GM10248 (cell line): ENCODE measurements at regions of chr6 and their contacts with region 1.

Region 1: GRCh38 chr6:25490018-25490801 is 161.8 kb upstream of the SCGN start:
- DNase-seq: peak; percentile 73
- CTCF ChIP-seq: peak; percentile 84

Region 2: GRCh38 chr6:25223490-25223991 is 266.7 kb before region 1 on chr6:
- CTCF ChIA-PET with region 1: interaction called, 25 read pairs
- POLR2A ChIA-PET with region 1: no interaction called
- DNase-seq: peak; percentile 62
- CTCF ChIP-seq: peak; percentile 92

Region 3: DNA sequence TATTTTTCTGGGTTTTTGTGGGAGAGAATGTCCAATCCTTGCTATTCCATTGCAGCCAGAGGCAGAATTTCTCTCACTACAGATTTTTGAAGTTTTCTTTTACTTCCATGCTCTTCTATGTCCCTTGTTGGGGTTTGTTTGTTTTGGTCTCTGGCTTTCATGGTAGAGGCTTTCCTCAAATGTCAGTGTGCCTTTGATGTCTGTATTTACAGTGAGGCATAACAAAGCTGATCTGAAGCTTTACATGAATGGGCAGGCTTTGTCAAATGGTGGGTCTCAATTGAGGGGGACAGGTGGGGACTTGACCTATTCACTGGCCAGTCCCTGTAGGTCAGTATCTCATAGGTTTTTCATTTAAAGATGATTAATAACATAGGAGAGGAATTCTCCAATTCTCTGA is 219.7 kb before region 1 on chr6:
- CTCF ChIA-PET with region 1: interaction called, 97 read pairs
- POLR2A ChIA-PET with region 1: no interaction called
- DNase-seq: no peak
- CTCF ChIP-seq: no peak

Region 4: GRCh38 chr6:25302677-25303128 is 187.5 kb before region 1 on chr6:
- CTCF ChIA-PET with region 1: interaction called, 10 read pairs
- POLR2A ChIA-PET with region 1: no interaction called
- DNase-seq: no peak
- CTCF ChIP-seq: no peak

Region 5: DNA sequence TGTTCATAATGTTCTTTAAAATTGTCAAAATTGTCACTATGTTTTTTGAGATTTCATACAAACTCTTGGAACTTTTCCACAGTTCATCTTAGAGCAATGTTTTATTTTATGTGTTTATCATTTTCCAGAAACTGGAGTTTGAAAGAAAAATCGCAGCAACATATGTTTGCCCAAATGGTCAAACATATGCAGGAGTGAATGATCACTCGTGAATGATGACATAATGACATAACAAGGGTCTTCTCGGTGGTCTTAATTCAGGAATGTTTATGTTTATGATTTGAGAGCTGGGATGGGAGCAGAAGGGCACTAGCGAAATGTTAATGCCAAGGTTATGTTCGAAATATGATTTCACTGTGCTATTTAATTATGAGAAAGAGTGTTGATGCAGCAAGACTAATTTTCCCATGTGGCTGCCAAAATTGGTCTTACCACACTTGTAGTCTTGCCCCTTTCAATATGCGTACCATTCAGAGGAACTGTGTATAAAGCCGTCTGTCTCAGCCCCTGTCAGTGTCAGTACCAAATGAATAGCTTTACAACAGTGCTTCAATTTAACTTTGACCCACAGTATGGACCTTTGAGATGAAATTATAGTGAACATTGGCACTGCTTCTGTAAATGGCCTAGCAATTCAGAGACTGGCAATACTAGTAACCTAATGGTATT is 58.8 kb before region 1 on chr6:
- CTCF ChIA-PET with region 1: no interaction called
- POLR2A ChIA-PET with region 1: no interaction called
- DNase-seq: no peak
- CTCF ChIP-seq: no peak

Region 6: GRCh38 chr6:25476831-25477590 is 13.2 kb before region 1 on chr6:
- CTCF ChIA-PET with region 1: interaction called, 52 read pairs
- POLR2A ChIA-PET with region 1: no interaction called
- DNase-seq: no peak
- CTCF ChIP-seq: no peak

Region 7: DNA sequence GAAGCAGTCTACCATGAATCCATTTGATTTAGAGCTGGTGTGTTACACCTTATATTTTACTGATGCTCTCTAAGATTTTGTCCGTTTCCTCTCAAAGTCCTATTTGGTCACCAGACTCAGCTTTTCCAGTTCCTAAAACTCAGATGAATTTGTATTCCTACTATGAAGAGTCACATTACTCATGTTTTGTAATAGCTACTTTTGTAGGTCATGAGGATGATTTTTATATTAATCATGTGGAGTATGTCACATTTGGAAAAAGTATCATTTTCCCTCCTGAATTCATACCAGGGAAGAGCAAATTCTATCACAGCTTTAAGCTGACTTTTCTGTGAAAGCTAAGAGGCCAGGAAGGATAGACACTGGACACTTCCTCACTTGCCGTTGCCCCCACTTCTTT is 21.2 kb after region 1 on chr6:
- CTCF ChIA-PET with region 1: interaction called, 19 read pairs
- POLR2A ChIA-PET with region 1: no interaction called
- DNase-seq: no peak
- CTCF ChIP-seq: no peak

Region 8: DNA sequence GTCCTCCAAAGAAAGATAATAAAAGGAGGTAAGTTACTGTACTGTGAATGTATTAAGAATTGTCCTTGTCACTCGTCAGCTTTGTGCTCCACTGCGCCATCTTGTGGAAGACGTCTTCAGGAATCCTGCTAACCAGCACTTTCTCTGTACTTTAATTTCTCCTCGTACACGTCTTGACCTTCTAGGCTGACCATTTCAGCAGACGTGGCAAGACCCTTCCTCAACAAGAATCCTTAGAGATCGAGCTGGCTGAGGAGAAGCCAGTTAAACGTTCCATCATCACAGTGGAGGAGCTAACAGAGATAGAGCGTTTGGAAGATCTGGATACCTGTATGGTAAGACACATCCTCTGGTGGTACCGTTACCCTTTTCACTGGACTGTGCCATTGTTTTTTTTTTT is 66.3 kb after region 1 on chr6:
- CTCF ChIA-PET with region 1: interaction called, 19 read pairs
- POLR2A ChIA-PET with region 1: no interaction called
- DNase-seq: peak; percentile 56
- CTCF ChIP-seq: peak; percentile 88

Region 9: DNA sequence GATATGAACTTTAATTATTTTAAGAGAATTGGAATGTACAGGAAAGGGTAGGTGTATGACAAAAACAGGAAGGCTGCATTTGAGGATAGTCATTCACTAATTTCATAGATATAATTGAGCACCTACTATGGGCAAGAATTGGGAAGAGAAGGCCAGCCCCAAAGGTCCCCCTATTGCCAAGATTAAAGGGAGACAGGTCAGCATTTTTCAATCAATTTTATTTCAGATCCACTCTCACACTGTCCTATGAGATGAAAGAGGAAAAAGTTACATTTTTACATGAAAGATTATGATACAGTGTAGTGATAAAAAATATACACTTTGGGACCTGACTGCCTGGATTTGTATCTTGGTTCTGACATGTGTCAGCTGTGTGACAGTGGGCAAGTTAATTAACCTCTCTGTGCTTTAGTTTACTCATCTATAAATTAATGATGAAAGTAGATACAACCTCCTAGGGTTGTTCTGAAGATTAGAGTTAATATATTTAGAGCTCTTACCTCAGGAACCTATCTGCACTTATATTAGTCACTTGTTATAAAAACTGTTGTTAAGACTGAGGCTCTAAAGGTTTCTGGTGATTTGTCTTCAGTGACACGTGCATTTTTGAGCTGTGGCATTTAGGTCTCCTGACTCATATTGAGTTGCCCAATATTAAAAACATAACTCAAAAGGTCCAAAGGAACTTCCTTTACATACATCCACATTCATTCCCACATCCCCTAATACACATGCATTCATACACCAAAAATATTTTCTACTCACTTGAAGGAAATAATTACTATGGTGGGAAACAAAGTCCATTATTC is 207.5 kb after region 1 on chr6:
- CTCF ChIA-PET with region 1: no interaction called
- POLR2A ChIA-PET with region 1: no interaction called
- DNase-seq: no peak
- CTCF ChIP-seq: no peak

Region 10: GRCh38 chr6:25835442-25836283 is 345.5 kb after region 1 on chr6:
- CTCF ChIA-PET with region 1: no interaction called
- POLR2A ChIA-PET with region 1: no interaction called
- DNase-seq: no peak
- CTCF ChIP-seq: no peak